IMR-90 (cell line): ENCODE measurements at regions of chr11 and their contacts with region 1.

Region 1: GRCh38 chr11:78525709-78526108 is 49.0 kb downstream of the NARS2 start:
- DNase-seq: no peak
- ATAC-seq: no peak
- H3K4me3 ChIP-seq: no peak overlapping the region
- H3K27ac ChIP-seq: no peak overlapping the region
- H3K4me1 ChIP-seq: no peaks in the 10 kb centered on the region
- H3K27me3 ChIP-seq: no peaks in the 10 kb centered on the region
- CTCF ChIP-seq: no peak
- POLR2A ChIP-seq: no peak
- RAD21 ChIP-seq: no peak

Region 2: GRCh38 chr11:78476066-78476465 is 49.6 kb before region 1 on chr11:
- CTCF ChIA-PET with region 1: no interaction called
- POLR2A ChIA-PET with region 1: no interaction called
- dilution Hi-C with region 1: no loop called
- in situ Hi-C with region 1: no loop called
- intact Hi-C with region 1: loop called (anchors 5 kb)
- DNase-seq: no peak
- ATAC-seq: no peak
- H3K4me3 ChIP-seq: no peak overlapping the region
- H3K27ac ChIP-seq: no peak overlapping the region
- H3K4me1 ChIP-seq: no peaks in the 10 kb centered on the region
- H3K27me3 ChIP-seq: no peaks in the 10 kb centered on the region
- CTCF ChIP-seq: no peak
- POLR2A ChIP-seq: no peak
- RAD21 ChIP-seq: no peak